RWPE1 (cell line): ENCODE measurements at regions of chr2 and their contacts with region 1.

Region 1: GRCh38 chr2:20661067-20661980 is 5.6 kb upstream of the GDF7 start:
- DNase-seq: peak; percentile 79
- H3K27ac ChIP-seq: no peak overlapping the region
- CTCF ChIP-seq: peak; percentile 93

Region 2: DNA sequence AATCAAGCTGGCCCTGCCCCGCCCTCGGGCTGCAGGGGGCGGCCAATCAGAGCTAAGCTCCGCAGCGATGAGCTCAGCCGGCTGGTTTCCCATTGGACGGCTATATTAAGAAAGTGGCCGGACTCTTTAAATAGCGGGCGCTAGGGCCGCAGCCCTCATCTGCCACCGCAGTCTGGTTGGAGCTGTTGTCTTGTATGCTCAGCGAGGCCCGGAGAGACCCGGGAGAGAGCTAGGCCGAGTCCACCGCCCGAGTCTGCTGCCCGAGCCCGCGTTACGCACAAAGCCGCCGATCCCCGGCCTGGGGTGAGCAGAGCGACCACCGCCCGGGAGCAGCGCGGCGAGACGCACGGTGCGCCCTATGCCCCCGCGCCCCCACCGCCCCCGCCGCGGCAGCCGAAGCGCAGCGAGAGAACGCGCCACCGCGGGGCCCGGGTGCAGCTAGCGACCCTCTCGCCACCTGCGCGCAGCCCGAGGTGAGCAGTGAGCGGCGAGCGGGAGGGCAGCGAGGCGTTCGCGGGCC is 214.3 kb before region 1 on chr2 and contains the start of gene RHOB:
- CTCF ChIA-PET with region 1: interaction called, 13 read pairs
- POLR2A ChIA-PET with region 1: no interaction called
- DNase-seq: peak; percentile 100
- H3K27ac ChIP-seq: peak within 1 kb of the TSS; percentile 81
- CTCF ChIP-seq: no peak

Region 3: DNA sequence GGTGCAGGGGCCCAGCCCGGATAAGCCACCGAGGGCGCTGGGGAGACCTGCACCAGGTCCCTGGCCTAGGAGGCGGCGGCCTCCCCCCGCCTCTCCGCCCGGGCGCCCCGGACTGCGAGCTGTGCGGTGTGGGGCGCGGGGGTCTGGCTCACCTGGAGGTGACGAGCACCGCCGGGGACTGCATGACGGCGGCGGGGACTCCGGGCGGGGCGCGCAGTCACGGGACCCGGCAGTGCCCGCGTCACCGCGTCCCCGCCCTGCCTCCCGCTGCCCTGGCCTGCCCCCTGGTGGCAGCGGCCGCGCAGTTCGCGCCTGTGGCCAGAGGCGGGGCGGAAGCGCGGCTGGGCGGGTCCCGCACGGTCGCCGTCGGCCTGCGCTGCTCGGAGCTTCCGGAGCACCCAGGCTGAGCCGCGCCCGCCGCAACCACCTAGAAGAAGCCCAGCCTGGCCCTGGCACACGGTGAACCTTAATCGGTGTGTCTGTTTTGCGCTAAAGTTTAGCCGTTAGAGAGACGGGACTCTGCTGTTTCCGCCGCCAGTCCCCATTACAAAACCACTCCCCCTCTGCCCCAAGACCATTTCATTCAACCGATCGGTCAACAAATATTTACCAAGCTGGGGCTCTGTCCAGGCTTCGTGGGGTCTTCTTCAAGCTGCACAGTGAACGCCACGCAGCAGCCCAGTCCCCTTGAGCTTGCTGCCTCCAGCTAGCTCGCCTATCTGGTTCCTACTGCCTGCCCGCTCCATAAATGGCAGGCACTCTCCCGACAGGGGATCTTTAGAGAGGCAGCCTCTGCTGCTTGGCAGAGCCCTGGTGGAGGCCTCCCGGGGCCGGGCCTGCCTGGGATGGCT is 10.2 kb before region 1 on chr2 and contains the start of gene HS1BP3:
- CTCF ChIA-PET with region 1: interaction called, 16 read pairs
- POLR2A ChIA-PET with region 1: no interaction called
- DNase-seq: peak; percentile 85
- H3K27ac ChIP-seq: peak within 1 kb of the TSS; percentile 71
- CTCF ChIP-seq: peak; percentile 94

Region 4: GRCh38 chr2:20675701-20676352 is 14.5 kb after region 1 on chr2:
- CTCF ChIA-PET with region 1: interaction called, 10 read pairs
- POLR2A ChIA-PET with region 1: no interaction called
- DNase-seq: peak; percentile 20
- H3K27ac ChIP-seq: no peak overlapping the region
- CTCF ChIP-seq: no peak

Region 5: GRCh38 chr2:20781656-20782265 is 120.4 kb after region 1 on chr2:
- CTCF ChIA-PET with region 1: interaction called, 12 read pairs
- POLR2A ChIA-PET with region 1: no interaction called
- DNase-seq: peak; percentile 44
- H3K27ac ChIP-seq: no peak overlapping the region
- CTCF ChIP-seq: peak; percentile 80

Region 6: GRCh38 chr2:20796374-20796791 is 135.1 kb after region 1 on chr2:
- CTCF ChIA-PET with region 1: no interaction called
- POLR2A ChIA-PET with region 1: no interaction called
- DNase-seq: peak; percentile 67
- H3K27ac ChIP-seq: no peak overlapping the region
- CTCF ChIP-seq: no peak

Region 7: DNA sequence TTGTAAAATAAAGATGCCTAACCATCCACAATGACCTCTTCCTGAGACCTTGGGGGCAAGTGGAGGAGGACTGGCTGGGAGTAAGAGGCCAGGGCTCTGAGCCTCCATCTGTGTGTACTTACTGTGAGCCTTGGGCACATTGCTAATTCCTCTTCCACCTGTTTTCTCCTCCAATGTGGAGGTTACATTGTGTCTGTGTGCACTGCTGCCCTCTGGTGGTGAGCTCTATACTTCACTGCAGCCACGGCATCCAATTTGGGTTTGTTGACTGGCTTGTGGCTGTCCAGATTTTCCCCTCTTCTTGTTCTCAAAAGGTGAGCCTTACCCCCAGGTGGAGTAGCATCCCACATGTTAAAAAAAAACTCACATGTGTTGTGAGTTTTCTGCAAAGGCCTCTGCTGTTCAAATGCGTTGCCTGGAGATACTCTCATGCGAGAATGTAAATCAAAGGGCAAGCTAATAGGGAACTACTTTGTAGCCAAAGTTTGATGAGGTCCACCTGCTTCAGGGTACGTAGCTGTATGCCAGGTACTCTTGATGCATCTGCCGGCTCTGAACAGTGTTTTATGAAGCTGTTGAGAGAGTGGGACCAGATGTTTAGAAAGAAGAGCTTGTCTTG is 301.7 kb after region 1 on chr2:
- CTCF ChIA-PET with region 1: interaction called, 46 read pairs
- POLR2A ChIA-PET with region 1: no interaction called
- DNase-seq: peak; percentile 62
- H3K27ac ChIP-seq: no peak overlapping the region
- CTCF ChIP-seq: peak; percentile 88

Region 8: DNA sequence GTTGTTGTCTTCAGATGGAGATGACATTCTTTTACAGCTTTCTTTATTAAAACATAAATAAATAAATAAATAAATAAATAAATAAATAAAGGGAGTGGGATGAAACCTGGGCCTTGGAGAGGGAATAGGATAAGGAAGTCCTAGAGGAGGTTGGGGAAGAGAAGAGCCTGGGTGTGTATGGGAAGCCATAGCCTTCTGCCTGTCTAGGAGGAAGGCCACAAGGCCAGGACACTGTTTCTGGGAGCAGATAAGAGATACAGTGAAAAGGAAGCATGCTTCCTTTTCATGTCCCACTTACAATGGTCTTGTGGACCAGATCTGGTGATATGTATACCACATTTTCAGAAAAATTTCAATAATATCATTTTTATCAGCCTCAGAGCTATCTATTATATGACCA is 456.4 kb after region 1 on chr2:
- CTCF ChIA-PET with region 1: interaction called, 10 read pairs
- POLR2A ChIA-PET with region 1: no interaction called
- DNase-seq: no peak
- H3K27ac ChIP-seq: no peak overlapping the region
- CTCF ChIP-seq: no peak